ENCODE measurements at regions of chr20 and their contacts with region 1.

Region 1: DNA sequence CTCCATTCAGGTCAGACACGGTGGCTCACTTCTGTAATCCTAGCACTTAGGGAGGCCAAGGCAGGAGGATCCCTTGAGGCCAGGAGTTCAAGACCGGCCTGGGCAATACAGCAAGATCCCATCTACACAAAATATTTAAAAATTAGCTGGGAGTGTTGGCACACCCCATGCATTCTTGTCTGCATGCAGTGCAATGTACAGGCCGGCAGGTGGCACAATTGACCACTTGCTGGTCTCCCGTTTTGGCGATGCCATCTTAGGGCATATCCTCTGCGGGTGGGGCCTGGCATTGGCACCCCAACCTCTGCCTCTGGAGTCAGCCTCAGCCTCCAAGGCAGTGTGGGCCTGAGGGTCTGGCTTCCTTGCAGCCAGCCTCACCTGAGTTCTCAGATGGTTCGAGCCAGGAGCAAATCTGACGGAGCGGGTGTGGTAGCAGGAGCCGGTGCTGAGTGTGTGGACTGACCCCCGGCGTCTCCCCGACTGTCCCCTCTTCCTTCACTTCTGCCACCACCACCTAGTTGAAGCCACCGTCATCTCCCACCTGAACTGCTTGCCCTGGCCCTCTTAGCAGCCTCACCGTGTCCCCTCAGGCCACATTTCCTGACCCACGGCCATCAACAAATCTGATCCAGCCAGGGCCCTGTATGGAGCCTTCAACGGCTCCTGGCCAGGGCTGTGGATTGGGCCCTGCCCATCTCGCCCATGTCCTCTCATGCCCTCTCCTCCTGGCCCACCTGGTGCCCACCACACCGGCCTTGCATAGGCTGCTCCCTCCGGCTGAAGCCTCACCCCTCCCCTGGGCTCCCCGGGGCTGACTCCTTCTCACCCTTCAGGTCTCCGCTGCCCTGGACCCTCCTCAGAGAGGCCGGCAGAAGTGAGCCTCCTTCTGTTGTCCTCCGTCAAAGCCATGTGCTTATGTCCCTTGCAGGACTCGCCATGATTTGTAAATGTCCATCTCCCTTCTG is 44.0 kb downstream of the EFCAB8 start:
- DNase-seq: peak; percentile 61 to 67 (median 65)
- ATAC-seq: peak; percentile 81 to 93 (median 88)
- H3K4me3 ChIP-seq: no peak overlapping the region
- H3K27ac ChIP-seq: no peak overlapping the region
- H3K4me1 ChIP-seq: no peaks in the 10 kb centered on the region
- H3K27me3 ChIP-seq: no peaks in the 10 kb centered on the region
- CTCF ChIP-seq: peak; percentile 90 to 95 (median 94)
- POLR2A ChIP-seq: no peak

Region 2: DNA sequence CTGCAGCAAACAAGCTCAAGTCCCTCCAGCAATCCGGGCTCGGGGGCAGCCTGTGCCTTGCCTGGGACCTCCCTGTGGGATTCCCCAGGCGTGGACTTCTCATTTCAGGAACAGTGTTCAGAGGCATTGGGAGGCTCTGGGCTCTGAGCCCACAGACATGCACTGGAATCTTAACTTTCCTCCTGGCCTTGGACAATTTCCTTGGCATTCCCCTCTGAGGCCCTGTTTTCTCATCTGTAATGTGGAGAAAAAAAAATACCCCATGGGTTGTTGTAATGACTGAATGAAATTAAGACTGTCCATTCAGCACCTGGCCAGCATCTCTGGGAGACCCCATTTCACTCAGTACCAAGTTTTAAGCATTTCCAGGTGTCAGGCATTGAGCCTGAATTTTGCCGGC is 194.3 kb after region 1 on chr20:
- intact Hi-C with region 1: loop called (anchors 2 to 5 kb)
- DNase-seq: no peak
- ATAC-seq: no peak
- H3K4me3 ChIP-seq: no peak overlapping the region
- H3K27ac ChIP-seq: no peak overlapping the region
- H3K4me1 ChIP-seq: no peaks in the 10 kb centered on the region
- H3K27me3 ChIP-seq: no peaks in the 10 kb centered on the region
- CTCF ChIP-seq: no peak
- POLR2A ChIP-seq: no peak

Region 3: DNA sequence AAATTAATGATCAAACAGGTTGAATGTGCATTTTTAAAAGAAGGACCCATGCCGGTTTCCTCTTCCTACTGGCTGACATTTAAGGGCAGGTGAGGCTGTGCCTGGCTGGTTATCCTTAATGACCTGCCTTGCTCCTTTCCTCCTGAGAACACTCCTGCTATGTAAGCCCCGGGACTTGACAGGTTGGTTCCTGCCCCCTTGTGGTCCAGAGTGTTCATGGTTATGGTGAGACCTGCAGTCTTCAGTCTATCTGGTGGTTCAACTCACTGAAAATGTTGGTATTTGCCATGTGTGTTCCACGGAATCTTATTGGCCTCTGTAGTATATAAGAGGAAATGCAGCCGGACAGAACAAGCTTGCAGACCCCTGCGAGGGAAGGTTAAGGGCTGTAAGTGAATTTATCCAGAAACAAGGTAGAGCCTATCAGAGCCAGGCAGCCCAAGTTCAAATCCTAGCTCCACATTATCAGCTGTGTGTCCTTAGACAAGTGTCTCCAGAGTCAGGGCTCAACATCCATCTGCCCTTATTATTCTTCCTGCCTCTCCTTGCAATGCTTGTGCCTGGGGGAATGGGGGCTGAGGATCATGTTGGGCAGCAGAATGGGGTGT is 309.2 kb after region 1 on chr20:
- intact Hi-C with region 1: loop called in 1 of 2 experiments (anchors 10 kb)
- DNase-seq: peak; percentile 47 to 72 (median 62)
- ATAC-seq: peak; percentile 89 to 95 (median 93)
- H3K4me3 ChIP-seq: no peak overlapping the region
- H3K27ac ChIP-seq: no peak overlapping the region
- H3K4me1 ChIP-seq: peaks cover 0 to 3% (median 0%) of the 10 kb centered on the region in 4 donors
- H3K27me3 ChIP-seq: no peaks in the 10 kb centered on the region
- CTCF ChIP-seq: peak; percentile 58 to 66 (median 60)
- POLR2A ChIP-seq: no peak

Region 4: GRCh38 chr20:33299111-33299603 is 396.4 kb after region 1 on chr20:
- intact Hi-C with region 1: loop called in 1 of 2 experiments (anchors 5 kb)
- DNase-seq: peak; percentile 63 to 72 (median 64)
- ATAC-seq: peak; percentile 75 to 90 (median 83)
- H3K4me3 ChIP-seq: no peak overlapping the region
- H3K27ac ChIP-seq: no peak overlapping the region
- H3K4me1 ChIP-seq: peaks cover 0 to 4% (median 0%) of the 10 kb centered on the region in 4 donors
- H3K27me3 ChIP-seq: no peaks in the 10 kb centered on the region
- CTCF ChIP-seq: peak; percentile 77 to 95 (median 88)
- POLR2A ChIP-seq: no peak

Measured in right lobe of liver (tissue), 6 donors.